GM18951 (cell line): ENCODE measurements at regions of chr1 and their contacts with region 1.

Region 1: DNA sequence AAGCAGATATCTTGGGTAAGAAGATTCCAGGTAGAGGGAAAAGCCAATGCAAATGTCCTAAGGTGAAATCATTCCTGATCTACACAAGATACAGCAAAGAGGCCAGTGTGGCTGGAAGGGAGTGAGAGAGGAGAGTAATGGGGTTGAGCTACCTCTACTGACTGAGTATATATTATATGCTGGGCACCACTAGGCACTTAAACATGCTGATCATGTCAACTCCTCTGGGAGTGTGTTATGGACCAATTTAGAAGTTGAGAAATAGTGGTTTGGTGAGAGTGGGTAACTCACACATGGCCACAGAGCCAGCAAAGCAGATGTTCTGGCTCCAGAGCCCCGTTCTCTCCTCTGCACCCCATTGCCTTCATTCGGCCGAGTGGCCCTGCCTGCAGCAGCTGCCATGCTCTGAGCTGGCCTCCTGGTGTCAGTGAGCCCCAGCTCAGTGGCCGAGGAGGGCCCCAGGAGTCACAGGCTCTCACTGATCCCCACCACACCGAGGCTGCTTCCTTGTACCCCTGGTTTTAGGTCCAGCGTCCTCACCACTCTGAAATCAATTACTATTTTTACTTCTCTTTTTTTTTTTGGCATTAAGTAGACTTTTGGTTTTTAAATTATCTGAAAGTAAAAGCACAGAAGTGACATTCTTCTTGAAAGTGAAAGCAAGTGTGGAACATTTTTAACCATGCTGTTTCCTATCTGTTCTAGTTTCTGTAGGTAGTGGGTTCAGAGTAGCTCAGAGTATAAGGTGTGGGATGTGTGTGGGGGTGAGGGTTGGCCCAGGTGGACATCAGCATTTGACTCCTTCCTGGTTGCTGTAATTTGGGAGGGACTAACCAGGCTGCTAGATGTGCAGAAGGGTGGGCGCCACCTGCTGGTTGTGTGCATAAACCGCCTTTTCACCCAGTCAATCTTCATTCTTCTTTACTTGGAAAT is 45.8 kb upstream of the CRNN start:
- POLR2A ChIP-seq: no peak

Region 2: DNA sequence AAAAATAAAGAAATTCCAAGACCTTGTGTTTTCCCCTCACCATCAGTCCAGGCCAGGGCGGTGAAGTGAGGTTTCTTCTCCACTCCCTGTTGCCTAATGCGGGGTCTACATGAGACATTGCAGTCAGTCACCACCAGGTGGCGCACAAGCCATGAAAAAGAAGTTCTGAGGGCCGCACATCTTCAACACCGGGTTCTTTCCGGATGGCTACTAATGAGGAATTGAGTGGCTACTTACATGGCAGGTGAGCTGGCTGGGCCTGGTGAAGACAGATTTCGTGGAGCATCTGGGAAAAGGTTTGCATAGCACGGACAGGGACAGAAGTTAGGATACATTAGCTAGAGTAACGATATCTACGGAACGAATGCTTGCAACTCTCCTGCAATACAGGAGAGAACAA is 407.3 kb before region 1 on chr1:
- in situ Hi-C with region 1: loop called (anchors 25 kb)
- POLR2A ChIP-seq: no peak

Region 3: DNA sequence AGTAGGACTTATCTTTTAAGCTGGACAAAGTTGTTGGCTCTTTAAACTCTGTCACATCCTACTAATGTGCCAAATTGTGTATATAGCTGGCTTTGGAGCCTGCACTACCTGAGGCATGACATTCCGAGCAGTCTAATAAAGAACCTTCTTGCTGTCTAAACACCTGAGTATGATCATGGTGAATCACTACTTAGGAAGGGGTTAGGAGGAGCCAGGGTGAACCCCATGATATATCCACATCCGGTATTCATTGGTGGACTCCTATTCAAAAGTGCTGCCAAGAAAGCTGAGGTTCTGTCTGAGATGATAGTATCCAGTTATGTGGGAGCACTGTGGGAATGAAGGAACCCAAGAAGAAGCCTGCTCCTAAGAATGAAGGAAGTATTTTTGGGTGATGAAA is 72.9 kb before region 1 on chr1:
- in situ Hi-C with region 1: no loop called
- POLR2A ChIP-seq: no peak

Region 4: GRCh38 chr1:152899883-152900282 is 440.0 kb after region 1 on chr1:
- in situ Hi-C with region 1: no loop called
- POLR2A ChIP-seq: no peak